CD4-positive, alpha-beta memory T cell (primary cell): ENCODE measurements at regions of chr5 and their contacts with region 1.

Region 1: GRCh38 chr5:118987988-118988865 is at the start of gene DTWD2:
- DNase-seq: peak; percentile 86 to 98 (median 94)
- H3K4me3 ChIP-seq: peak within 1 kb of the TSS; percentile 57 to 70
- H3K4me3 Mint-ChIP-seq: peak within 1 kb of the TSS; percentile 80 to 87 (median 84)
- H3K27ac ChIP-seq: peak within 1 kb of the TSS; percentile 66
- H3K27ac Mint-ChIP-seq: peak within 1 kb of the TSS; percentile 66 to 90 (median 80)
- H3K4me1 ChIP-seq: peaks cover 16% of the 10 kb centered on the region
- H3K4me1 Mint-ChIP-seq: peaks cover 9 to 20% (median 11%) of the 10 kb centered on the region in 4 donors
- H3K27me3 ChIP-seq: no peaks in the 10 kb centered on the region
- H3K27me3 Mint-ChIP-seq: no peaks in the 10 kb centered on the region
- total RNA-seq, gene DTWD2: 3.5 TPM

Region 2: DNA sequence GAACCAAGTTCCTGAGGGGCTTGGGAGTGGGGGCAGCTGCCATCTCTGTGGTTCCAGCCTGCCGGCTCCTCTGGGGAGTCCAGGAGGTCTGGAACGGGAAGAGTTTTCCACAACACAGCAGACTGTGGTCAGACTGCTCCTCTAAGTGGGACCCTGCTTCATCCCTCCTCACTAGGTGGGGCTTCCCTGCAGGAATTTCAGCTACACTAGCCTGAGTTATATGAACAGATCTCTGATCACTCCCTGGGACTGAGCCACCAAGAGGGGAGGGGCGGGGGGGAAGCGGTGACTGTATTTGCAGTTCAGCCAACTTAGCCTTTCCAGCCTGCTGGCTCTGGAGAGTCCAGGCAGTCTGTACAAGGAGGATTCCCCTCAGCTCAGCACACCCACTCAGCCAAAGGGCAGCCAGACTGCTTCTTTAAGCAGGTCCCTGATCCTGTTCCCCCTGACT is 19.3 kb before region 1 on chr5:
- CTCF ChIA-PET with region 1: interaction called, 14 read pairs
- POLR2A ChIA-PET with region 1: no interaction called
- intact Hi-C with region 1: no loop called
- DNase-seq: no peak
- H3K4me3 ChIP-seq: no peak overlapping the region
- H3K4me3 Mint-ChIP-seq: no peak overlapping the region
- H3K27ac ChIP-seq: no peak overlapping the region
- H3K27ac Mint-ChIP-seq: no peak overlapping the region
- H3K4me1 ChIP-seq: peaks cover 5% of the 10 kb centered on the region
- H3K4me1 Mint-ChIP-seq: peaks cover 0 to 28% (median 14%) of the 10 kb centered on the region in 4 donors
- H3K27me3 ChIP-seq: no peaks in the 10 kb centered on the region
- H3K27me3 Mint-ChIP-seq: no peaks in the 10 kb centered on the region

Region 3: GRCh38 chr5:119070828-119071572 is 82.8 kb after region 1 on chr5 and contains the start of gene DMXL1:
- CTCF ChIA-PET with region 1: interaction called, 19 read pairs
- POLR2A ChIA-PET with region 1: interaction called, 16 read pairs
- intact Hi-C with region 1: loop called (anchors 1 kb)
- DNase-seq: peak; percentile 97 to 99 (median 98)
- H3K4me3 ChIP-seq: peak within 1 kb of the TSS; percentile 63 to 95
- H3K4me3 Mint-ChIP-seq: peak within 1 kb of the TSS; percentile 92 to 99 (median 99)
- H3K27ac ChIP-seq: peak within 1 kb of the TSS; percentile 86
- H3K27ac Mint-ChIP-seq: peak within 1 kb of the TSS; percentile 99 to 100 (median 99)
- H3K4me1 ChIP-seq: peaks cover 48% of the 10 kb centered on the region
- H3K4me1 Mint-ChIP-seq: peaks cover 21 to 46% (median 29%) of the 10 kb centered on the region in 4 donors
- H3K27me3 ChIP-seq: no peaks in the 10 kb centered on the region
- H3K27me3 Mint-ChIP-seq: peaks cover 0 to 2% of the 10 kb centered on the region in 2 donors
- total RNA-seq, gene DMXL1: 33.2 to 37.9 TPM

Region 4: GRCh38 chr5:119267958-119268386 is 279.7 kb after region 1 on chr5:
- CTCF ChIA-PET with region 1: interaction called, 9 read pairs
- POLR2A ChIA-PET with region 1: interaction called, 5 read pairs
- intact Hi-C with region 1: loop called (anchors 1 kb)
- DNase-seq: peak; percentile 74 to 93 (median 83)
- H3K4me3 ChIP-seq: peak overlapping the region; percentile 53 to 83
- H3K4me3 Mint-ChIP-seq: peak overlapping the region; percentile 97 to 100 (median 100)
- H3K27ac ChIP-seq: peak overlapping the region; percentile 90
- H3K27ac Mint-ChIP-seq: peak overlapping the region; percentile 96 to 99 (median 97)
- H3K4me1 ChIP-seq: peaks cover 30% of the 10 kb centered on the region
- H3K4me1 Mint-ChIP-seq: peaks cover 37 to 72% (median 43%) of the 10 kb centered on the region in 4 donors
- H3K27me3 ChIP-seq: no peaks in the 10 kb centered on the region
- H3K27me3 Mint-ChIP-seq: no peaks in the 10 kb centered on the region

Region 5: GRCh38 chr5:119309326-119309725 is 321.1 kb after region 1 on chr5:
- CTCF ChIA-PET with region 1: interaction called, 6 read pairs
- POLR2A ChIA-PET with region 1: no interaction called
- intact Hi-C with region 1: loop called (anchors 1 kb)
- DNase-seq: peak in 1 of 5 donors; percentile 41
- H3K4me3 ChIP-seq: no peak overlapping the region
- H3K4me3 Mint-ChIP-seq: peak overlapping the region; percentile 68 to 93 (median 78)
- H3K27ac ChIP-seq: peak overlapping the region; percentile 52
- H3K27ac Mint-ChIP-seq: peak overlapping the region; percentile 94 to 99 (median 98)
- H3K4me1 ChIP-seq: peaks cover 100% of the 10 kb centered on the region
- H3K4me1 Mint-ChIP-seq: peaks cover 70 to 97% (median 82%) of the 10 kb centered on the region in 4 donors
- H3K27me3 ChIP-seq: no peaks in the 10 kb centered on the region
- H3K27me3 Mint-ChIP-seq: no peaks in the 10 kb centered on the region

Region 6: GRCh38 chr5:119411935-119412602 is 423.8 kb after region 1 on chr5:
- CTCF ChIA-PET with region 1: interaction called, 116 read pairs
- POLR2A ChIA-PET with region 1: interaction called, 17 read pairs
- intact Hi-C with region 1: loop called (anchors 1 kb)
- DNase-seq: peak; percentile 64 to 73 (median 69)
- H3K4me3 ChIP-seq: peak overlapping the region; percentile 33 to 39
- H3K4me3 Mint-ChIP-seq: peak overlapping the region; percentile 79 to 91 (median 83)
- H3K27ac ChIP-seq: no peak overlapping the region
- H3K27ac Mint-ChIP-seq: peak overlapping the region in 6 of 7 donors; percentile 43 to 88 (median 58)
- H3K4me1 ChIP-seq: peaks cover 7% of the 10 kb centered on the region
- H3K4me1 Mint-ChIP-seq: peaks cover 12 to 24% (median 15%) of the 10 kb centered on the region in 4 donors
- H3K27me3 ChIP-seq: no peaks in the 10 kb centered on the region
- H3K27me3 Mint-ChIP-seq: peaks cover 4 to 5% of the 10 kb centered on the region in 2 donors

Region 7: GRCh38 chr5:119452373-119453039 is 464.3 kb after region 1 on chr5 and contains the start of gene HSD17B4:
- CTCF ChIA-PET with region 1: interaction called, 18 read pairs
- POLR2A ChIA-PET with region 1: no interaction called
- intact Hi-C with region 1: loop called (anchors 1 kb)
- DNase-seq: peak; percentile 82 to 86 (median 85)
- H3K4me3 ChIP-seq: peak within 1 kb of the TSS; percentile 74 to 84
- H3K4me3 Mint-ChIP-seq: peak within 1 kb of the TSS; percentile 92 to 98 (median 95)
- H3K27ac ChIP-seq: peak within 1 kb of the TSS; percentile 72
- H3K27ac Mint-ChIP-seq: peak within 1 kb of the TSS; percentile 83 to 95 (median 92)
- H3K4me1 ChIP-seq: peaks cover 17% of the 10 kb centered on the region
- H3K4me1 Mint-ChIP-seq: peaks cover 11 to 25% (median 17%) of the 10 kb centered on the region in 4 donors
- H3K27me3 ChIP-seq: no peaks in the 10 kb centered on the region
- H3K27me3 Mint-ChIP-seq: peaks cover 0 to 2% of the 10 kb centered on the region in 2 donors
- total RNA-seq, gene HSD17B4: 60.2 to 79.1 TPM